Right cardiac atrium (tissue), 5 donors: ENCODE measurements at regions of chr6 and their contacts with region 1.

Region 1: GRCh38 chr6:22906091-22906555 is 336.8 kb downstream of the HDGFL1 start:
- DNase-seq: no peak
- ATAC-seq: peak; percentile 31 to 70
- H3K4me3 ChIP-seq: no peak overlapping the region
- H3K27ac ChIP-seq: no peak overlapping the region
- H3K4me1 ChIP-seq: no peaks in the 10 kb centered on the region
- H3K27me3 ChIP-seq: no peaks in the 10 kb centered on the region

Region 2: GRCh38 chr6:22764496-22764895 is 141.6 kb before region 1 on chr6:
- intact Hi-C with region 1: loop called in 1 of 4 experiments (anchors 10 kb)
- DNase-seq: no peak
- ATAC-seq: no peak
- H3K4me3 ChIP-seq: no peak overlapping the region
- H3K27ac ChIP-seq: no peak overlapping the region
- H3K4me1 ChIP-seq: no peaks in the 10 kb centered on the region
- H3K27me3 ChIP-seq: no peaks in the 10 kb centered on the region